Activated naive CD4-positive, alpha-beta T cell treated with anti-CD3 and anti-CD28 coated beads for 36 hours (primary cell): ENCODE measurements at regions of chr9 and their contacts with region 1.

Region 1: GRCh38 chr9:98255578-98256296 is at the start of gene TBC1D2:
- DNase-seq: peak; percentile 98
- H3K4me3 Mint-ChIP-seq: peak within 1 kb of the TSS; percentile 86
- H3K27ac Mint-ChIP-seq: peak within 1 kb of the TSS; percentile 97
- H3K4me1 Mint-ChIP-seq: peaks cover 25% of the 10 kb centered on the region
- H3K27me3 Mint-ChIP-seq: peaks cover 2% of the 10 kb centered on the region
- total RNA-seq, gene TBC1D2: 2.4 to 2.5 TPM

Region 2: DNA sequence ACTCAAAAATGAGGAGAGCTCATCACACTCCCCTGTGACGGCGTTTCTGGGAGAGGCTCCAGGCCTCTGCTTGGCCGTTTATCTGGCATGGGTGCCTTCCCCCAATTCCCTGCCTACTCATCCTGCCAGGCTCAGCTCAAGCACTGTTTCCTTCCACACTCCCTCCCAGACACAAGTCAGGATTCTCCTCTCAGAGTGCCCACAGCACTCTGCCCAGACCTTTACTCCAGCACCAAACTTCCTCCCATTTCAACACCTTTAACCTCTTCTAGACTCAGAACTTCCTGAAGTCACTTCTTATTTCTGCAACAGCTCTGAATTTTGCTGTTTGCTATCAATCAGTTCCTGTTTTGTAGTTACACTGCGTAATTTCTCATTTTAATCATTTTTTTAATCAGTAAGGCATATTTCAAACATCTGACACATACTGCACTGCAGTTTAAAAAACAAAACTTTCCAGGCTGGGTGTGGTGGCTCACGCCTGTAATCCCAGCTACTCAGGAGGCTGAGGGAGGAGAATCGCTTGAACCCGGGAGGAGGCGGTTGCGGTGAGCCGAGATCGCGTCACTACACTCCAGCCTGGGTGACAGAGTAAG is 349.4 kb before region 1 on chr9:
- CTCF ChIA-PET with region 1: interaction called, 4 read pairs
- intact Hi-C with region 1: loop called (anchors 5 kb)
- DNase-seq: peak; percentile 66
- H3K4me3 Mint-ChIP-seq: peak overlapping the region; percentile 80
- H3K27ac Mint-ChIP-seq: peak overlapping the region; percentile 98
- H3K4me1 Mint-ChIP-seq: peaks cover 69% of the 10 kb centered on the region
- H3K27me3 Mint-ChIP-seq: no peaks in the 10 kb centered on the region

Region 3: DNA sequence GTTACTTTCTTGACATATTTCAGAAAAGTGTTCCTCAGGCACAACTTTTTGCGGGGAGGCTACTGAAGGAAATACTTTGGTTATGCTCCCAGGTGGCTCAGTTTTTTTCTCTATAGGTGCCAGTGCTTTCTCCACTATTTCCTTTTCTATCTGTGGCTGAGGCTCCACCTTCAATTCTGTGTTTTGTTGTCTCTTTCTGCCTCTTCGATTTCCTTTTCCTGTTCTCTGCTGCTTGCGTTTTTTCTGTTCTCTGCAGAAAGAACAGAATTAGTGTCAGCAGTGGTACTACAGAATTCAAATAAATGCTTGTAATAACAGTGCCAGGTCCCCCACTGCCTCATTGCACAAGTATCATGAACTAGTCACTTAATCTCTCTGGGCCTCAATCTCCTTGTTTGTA is 324.8 kb before region 1 on chr9:
- CTCF ChIA-PET with region 1: no interaction called
- intact Hi-C with region 1: no loop called
- DNase-seq: peak; percentile 21
- H3K4me3 Mint-ChIP-seq: peak overlapping the region; percentile 59
- H3K27ac Mint-ChIP-seq: peak overlapping the region; percentile 88
- H3K4me1 Mint-ChIP-seq: peaks cover 59% of the 10 kb centered on the region
- H3K27me3 Mint-ChIP-seq: no peaks in the 10 kb centered on the region

Region 4: GRCh38 chr9:98056269-98057137 is 199.2 kb before region 1 on chr9 and contains the start of gene NANS:
- CTCF ChIA-PET with region 1: interaction called, 6 read pairs
- intact Hi-C with region 1: loop called (anchors 1 kb)
- DNase-seq: peak; percentile 93
- H3K4me3 Mint-ChIP-seq: peak within 1 kb of the TSS; percentile 94
- H3K27ac Mint-ChIP-seq: peak within 1 kb of the TSS; percentile 92
- H3K4me1 Mint-ChIP-seq: peaks cover 27% of the 10 kb centered on the region
- H3K27me3 Mint-ChIP-seq: no peaks in the 10 kb centered on the region
- total RNA-seq, gene NANS: 46.1 to 51.0 TPM

Region 5: GRCh38 chr9:98101868-98102273 is 153.9 kb before region 1 on chr9:
- CTCF ChIA-PET with region 1: interaction called, 4 read pairs
- intact Hi-C with region 1: loop called (anchors 1 kb)
- DNase-seq: peak; percentile 90
- H3K4me3 Mint-ChIP-seq: peak overlapping the region; percentile 65
- H3K27ac Mint-ChIP-seq: peak overlapping the region; percentile 96
- H3K4me1 Mint-ChIP-seq: peaks cover 83% of the 10 kb centered on the region
- H3K27me3 Mint-ChIP-seq: no peaks in the 10 kb centered on the region

Region 6: DNA sequence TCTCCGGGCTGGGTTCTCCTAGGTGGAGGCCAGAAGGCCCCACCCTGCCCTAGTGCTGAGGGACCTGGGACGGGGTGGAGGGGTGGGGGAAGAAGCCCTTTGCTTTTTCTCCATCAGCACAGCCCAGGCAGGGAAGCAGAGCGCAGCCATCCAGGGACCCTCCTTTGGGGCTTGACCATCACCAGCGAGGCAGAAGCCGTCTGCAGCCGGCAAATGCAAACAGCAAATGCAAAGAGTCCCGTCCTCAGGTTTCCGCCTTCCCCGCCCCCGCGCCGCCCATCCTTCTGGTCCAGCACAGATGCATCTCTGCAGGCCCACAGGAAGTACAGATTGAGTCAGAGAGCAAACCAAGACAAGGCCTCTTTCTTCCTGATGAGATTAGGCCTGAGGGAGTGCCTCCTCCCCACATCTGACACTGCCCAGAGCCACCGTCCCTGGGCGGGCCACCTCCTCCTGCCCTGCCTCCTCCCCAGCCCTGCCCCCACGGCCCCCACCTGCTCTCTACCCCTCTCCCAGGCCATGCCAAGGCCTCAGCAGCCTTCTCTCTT is 86.7 kb before region 1 on chr9:
- CTCF ChIA-PET with region 1: no interaction called
- intact Hi-C with region 1: no loop called
- DNase-seq: no peak
- H3K4me3 Mint-ChIP-seq: no peak overlapping the region
- H3K27ac Mint-ChIP-seq: no peak overlapping the region
- H3K4me1 Mint-ChIP-seq: peaks cover 21% of the 10 kb centered on the region
- H3K27me3 Mint-ChIP-seq: no peaks in the 10 kb centered on the region

Region 7: DNA sequence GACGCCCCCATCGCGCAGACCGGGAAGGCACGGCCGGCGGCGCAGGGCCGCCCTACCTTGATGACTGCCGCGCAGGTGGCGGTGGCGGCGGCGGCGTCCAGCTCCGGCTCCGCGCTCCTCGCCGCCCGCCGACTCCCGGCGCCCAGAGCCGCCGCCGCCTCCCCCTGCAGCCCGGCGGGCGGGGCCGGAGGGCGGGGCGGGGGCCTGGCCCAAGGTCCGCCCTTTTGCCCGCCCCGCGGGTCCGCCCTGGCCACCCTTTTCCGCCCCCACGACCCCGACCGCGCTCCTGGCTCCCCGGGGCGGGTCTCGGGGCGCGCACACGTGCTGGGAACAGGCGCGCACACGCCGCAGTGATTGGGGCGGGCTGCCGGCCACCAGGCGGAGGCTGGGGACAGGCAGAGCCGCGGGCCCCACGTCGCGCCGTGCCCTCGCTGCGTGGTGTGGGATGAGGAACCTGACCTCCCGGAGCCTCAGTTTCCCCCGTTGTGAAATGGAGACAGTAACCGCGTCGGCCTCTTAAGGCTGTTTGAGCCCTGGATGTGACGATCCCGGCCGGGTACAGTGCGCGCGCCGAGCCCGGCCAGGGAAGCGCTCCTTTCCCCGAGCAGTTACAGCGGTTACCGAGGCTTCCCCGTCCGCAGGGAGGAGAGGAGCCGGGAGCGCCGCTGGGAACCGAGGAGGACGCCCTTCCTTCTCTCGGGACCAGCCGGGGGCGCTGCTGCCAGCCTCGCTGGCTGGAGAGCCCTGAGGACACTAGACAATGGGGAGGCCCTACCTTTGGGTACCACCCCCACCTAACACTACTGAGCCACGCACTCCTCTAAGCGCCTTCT is 63.0 kb before region 1 on chr9 and contains the start of gene CORO2A:
- CTCF ChIA-PET with region 1: interaction called, 6 read pairs
- intact Hi-C with region 1: loop called (anchors 1 kb)
- DNase-seq: peak; percentile 64
- H3K4me3 Mint-ChIP-seq: peak within 1 kb of the TSS; percentile 82
- H3K27ac Mint-ChIP-seq: peak within 1 kb of the TSS; percentile 56
- H3K4me1 Mint-ChIP-seq: peaks cover 27% of the 10 kb centered on the region
- H3K27me3 Mint-ChIP-seq: no peaks in the 10 kb centered on the region
- total RNA-seq, gene CORO2A: 8.1 to 8.2 TPM

Region 8: DNA sequence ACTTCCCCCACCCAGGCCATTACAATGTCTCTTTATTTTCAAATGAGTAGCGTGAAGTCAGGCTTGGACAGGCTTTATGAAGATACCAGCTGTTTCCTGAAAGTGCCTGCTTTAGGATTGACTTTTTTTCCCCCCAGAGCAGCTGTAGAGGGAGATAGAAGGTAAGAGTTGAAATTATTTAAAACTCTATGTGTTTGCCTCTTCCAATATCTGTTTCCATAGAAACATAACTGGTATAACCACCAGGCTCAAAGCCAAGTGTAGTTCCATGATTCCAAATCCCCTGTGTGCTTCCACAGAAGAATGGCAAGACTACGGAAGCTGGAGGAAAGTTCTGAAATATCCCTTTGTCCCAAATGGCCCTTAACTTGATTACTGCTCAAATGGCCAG is 87.1 kb after region 1 on chr9:
- CTCF ChIA-PET with region 1: no interaction called
- intact Hi-C with region 1: no loop called
- DNase-seq: no peak
- H3K4me3 Mint-ChIP-seq: no peak overlapping the region
- H3K27ac Mint-ChIP-seq: no peak overlapping the region
- H3K4me1 Mint-ChIP-seq: no peaks in the 10 kb centered on the region
- H3K27me3 Mint-ChIP-seq: peaks cover 17% of the 10 kb centered on the region

Region 9: DNA sequence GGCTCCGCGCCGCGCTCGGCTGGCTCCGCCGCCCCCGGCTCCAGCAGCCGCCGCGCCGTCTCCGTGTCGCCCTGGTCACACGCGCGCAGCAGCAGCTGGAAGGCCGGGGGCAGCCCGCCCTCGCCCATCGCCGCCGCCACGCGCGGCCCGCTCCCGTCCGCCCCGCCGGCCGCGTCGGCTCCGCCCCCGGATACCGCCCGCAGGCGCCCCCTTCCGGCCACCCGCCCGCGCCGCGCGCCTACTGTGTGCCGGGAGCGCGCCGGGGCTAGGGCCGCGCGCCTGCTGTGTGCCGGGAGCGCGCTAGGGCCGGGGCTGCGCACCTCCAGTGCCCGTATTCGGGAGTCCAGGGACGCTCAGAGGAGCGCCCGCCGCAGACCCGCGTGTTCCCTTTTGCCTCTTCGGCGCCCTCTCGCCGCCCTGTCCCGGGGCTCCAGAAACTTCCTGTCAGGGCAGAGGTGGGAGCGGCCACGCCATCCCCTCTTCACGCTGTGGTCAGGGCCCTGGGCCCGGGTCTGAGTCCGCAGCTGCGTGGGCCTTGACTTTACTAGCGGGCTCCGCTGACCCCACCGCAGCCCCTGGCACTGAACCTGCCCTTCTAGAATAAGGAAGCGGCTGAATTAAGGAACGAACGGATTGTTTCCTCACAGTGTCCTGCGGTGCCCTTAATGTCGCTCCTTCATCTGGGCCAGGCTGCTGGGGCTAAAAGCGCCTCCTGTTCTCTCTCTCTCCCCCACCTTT is 540.8 kb after region 1 on chr9 and contains the start of gene ANKS6:
- CTCF ChIA-PET with region 1: no interaction called
- intact Hi-C with region 1: loop called (anchors 5 kb)
- DNase-seq: peak; percentile 81
- H3K4me3 Mint-ChIP-seq: peak within 1 kb of the TSS; percentile 77
- H3K27ac Mint-ChIP-seq: peak within 1 kb of the TSS; percentile 56
- H3K4me1 Mint-ChIP-seq: peaks cover 30% of the 10 kb centered on the region
- H3K27me3 Mint-ChIP-seq: no peaks in the 10 kb centered on the region
- total RNA-seq, gene ANKS6: 14.6 to 15.0 TPM